Left colon (tissue), 2 donors: ENCODE measurements at regions of chr1 and their contacts with region 1.

Region 1: GRCh38 chr1:67053785-67054772 is at the start of gene SLC35D1:
- DNase-seq: peak; percentile 81 to 88
- ATAC-seq: peak; percentile 89
- total RNA-seq, gene SLC35D1: 77.5 to 82.7 TPM

Region 2: DNA sequence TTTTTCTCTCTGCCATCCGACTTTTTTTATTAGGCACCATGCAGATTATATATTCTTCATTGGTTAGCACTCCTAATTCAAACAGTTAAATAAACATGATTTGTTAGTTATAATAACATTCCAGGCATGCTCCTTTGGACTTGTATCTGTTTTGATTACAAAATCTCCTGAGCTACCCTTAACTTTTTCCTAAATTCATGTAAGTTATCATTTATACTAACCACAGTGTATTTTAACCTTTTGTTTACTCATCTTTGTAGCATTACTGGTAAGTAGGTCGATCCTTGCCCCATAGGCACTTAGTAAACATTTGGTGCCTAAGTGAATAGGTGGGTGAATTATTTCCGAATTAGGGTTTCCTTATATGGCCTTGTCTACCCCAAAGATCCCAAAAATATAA is 85.5 kb before region 1 on chr1:
- intact Hi-C with region 1: no loop called
- DNase-seq: no peak
- ATAC-seq: no peak

Region 3: DNA sequence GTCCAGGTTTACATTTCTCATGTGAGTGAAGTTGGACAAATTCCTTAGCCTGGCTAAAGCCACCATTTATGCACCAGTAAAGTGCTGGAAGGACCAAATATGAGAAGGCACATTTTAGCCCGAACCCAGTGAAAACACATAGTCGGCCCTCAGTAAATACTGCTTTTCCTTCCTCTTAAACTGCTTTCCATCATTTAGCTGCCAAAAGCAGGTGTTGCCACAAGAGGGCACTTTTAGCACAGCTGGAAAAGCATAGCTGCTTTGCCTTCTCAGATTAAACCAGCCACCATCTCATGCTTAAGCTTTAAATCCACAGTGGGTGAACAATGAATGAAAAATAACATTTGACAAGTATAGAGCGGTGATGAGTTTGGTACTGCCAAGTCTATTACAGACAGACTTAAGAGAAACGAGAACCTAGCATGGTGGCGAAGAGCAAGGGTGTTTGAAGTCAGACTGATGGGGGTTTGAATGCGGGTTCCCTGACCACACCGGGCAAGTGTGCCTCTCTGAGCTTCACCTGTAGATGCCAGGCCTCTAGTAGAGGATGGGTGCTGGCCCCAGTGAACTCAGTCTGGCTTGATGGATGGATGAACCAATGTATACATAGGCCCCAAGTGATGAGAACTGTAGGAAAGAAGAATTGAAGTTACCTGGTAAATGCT is 57.9 kb before region 1 on chr1:
- intact Hi-C with region 1: loop called in 1 of 2 experiments (anchors 10 kb)
- DNase-seq: peak; percentile 54 to 68
- ATAC-seq: peak; percentile 80